ENCODE measurements at regions of chr1 and their contacts with region 1.

Region 1: DNA sequence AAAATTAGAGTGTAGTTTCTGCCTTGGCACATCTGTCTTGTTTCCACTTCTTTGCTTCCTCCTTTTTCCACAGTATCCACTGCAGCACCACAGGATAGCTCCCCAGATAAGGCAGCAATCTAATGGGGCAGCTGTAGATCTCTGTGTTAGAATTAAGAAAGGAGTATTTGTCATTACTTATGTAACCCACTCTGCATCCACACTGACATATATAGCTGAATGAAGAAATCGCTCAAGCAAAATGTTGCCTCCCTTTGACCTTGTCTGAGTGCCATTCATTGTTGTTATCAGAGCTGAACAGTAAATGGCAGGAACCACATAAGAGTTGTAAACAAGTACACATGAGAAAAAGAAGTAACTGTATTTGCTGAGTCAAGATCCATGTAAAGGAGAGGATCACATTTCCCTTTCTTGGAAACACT is 45.9 kb upstream of the DPH5 start:
- DNase-seq: no peak
- ATAC-seq: no peak
- H3K4me3 Mint-ChIP-seq: no peak overlapping the region
- H3K27ac Mint-ChIP-seq: no peak overlapping the region
- H3K4me1 Mint-ChIP-seq: peaks cover 37% of the 10 kb centered on the region
- H3K27me3 Mint-ChIP-seq: no peaks in the 10 kb centered on the region
- CTCF ChIP-seq: no peak

Region 2: GRCh38 chr1:101002551-101002950 is 68.9 kb before region 1 on chr1:
- CTCF ChIA-PET with region 1: no interaction called
- POLR2A ChIA-PET with region 1: no interaction called
- intact Hi-C with region 1: no loop called
- DNase-seq: no peak
- ATAC-seq: peak; percentile 40
- H3K4me3 Mint-ChIP-seq: no peak overlapping the region
- H3K27ac Mint-ChIP-seq: peak overlapping the region; percentile 26
- H3K4me1 Mint-ChIP-seq: peaks cover 31% of the 10 kb centered on the region
- H3K27me3 Mint-ChIP-seq: no peaks in the 10 kb centered on the region
- CTCF ChIP-seq: no peak

Region 3: DNA sequence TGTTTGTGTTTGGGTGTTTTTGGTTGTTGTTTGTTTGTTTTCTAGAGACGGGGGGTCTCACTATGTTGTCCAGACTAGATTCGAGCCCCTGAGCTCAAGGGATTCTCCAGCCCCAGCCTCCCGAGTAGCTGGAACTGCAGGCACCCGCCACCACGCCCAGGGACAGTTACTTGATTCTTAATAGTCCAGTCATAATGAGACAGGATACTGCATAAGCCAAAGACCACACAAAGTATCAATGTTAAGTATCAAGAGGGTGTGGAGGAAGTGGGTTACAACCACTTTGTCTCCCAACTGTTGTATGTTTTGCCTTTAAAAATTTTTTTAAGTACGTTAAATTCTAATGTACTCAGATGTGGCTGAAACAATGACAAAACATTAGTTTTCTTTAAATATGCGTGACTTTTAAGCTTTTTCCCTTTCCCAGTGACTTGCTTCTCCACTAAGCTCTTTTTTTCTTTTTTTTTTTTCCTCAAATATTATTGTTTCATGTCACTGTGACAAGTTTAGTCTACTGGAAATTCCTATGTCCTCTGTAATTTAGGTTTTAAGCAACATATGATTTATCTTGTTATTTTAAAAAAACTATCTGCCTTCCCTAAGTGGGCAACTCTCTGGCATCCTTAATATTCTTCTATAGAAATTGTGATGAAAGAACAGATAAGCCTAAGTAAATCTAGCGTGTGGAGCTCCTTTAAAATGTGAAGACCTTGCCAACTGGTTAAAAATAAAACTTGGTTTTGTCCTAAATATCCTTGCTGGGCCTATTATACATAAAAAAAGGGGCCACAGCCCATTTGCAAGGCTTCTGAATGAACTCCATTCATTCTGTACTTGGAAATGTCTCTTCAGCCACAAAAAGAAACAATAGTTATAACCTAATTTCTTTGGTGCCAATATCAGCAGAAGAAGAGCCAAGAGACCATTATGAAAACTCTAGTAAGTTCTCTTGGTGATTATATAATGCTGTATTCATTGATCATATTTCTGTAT is 10.3 kb after region 1 on chr1:
- CTCF ChIA-PET with region 1: interaction called, 3 read pairs
- POLR2A ChIA-PET with region 1: no interaction called
- intact Hi-C with region 1: loop called (anchors 2 kb)
- DNase-seq: no peak
- ATAC-seq: peak; percentile 52
- H3K4me3 Mint-ChIP-seq: no peak overlapping the region
- H3K27ac Mint-ChIP-seq: peak overlapping the region; percentile 19
- H3K4me1 Mint-ChIP-seq: peaks cover 38% of the 10 kb centered on the region
- H3K27me3 Mint-ChIP-seq: no peaks in the 10 kb centered on the region
- CTCF ChIP-seq: no peak

Measured in activated B cell treated with CpG ODN at 0.5 μM for 24 hours (primary cell).